ENCODE measurements at regions of chr4 and their contacts with region 1.

Region 1: GRCh38 chr4:74038161-74039064 is at the start of gene CXCL3:
- DNase-seq: peak; percentile 71 to 75
- H3K4me3 ChIP-seq: peak within 1 kb of the TSS; percentile 53
- H3K4me3 Mint-ChIP-seq: peak within 1 kb of the TSS; percentile 78
- H3K27ac Mint-ChIP-seq: peak within 1 kb of the TSS; percentile 14
- H3K4me1 ChIP-seq: no peaks in the 10 kb centered on the region; the same call in 1 of the 2 replicates
- H3K4me1 Mint-ChIP-seq: peaks cover 15% of the 10 kb centered on the region
- H3K27me3 ChIP-seq: no peaks in the 10 kb centered on the region
- H3K27me3 Mint-ChIP-seq: no peaks in the 10 kb centered on the region
- CTCF ChIP-seq: no peak
- total RNA-seq, gene CXCL3: 1.9 and 4.3 TPM in 2 replicates

Region 2: DNA sequence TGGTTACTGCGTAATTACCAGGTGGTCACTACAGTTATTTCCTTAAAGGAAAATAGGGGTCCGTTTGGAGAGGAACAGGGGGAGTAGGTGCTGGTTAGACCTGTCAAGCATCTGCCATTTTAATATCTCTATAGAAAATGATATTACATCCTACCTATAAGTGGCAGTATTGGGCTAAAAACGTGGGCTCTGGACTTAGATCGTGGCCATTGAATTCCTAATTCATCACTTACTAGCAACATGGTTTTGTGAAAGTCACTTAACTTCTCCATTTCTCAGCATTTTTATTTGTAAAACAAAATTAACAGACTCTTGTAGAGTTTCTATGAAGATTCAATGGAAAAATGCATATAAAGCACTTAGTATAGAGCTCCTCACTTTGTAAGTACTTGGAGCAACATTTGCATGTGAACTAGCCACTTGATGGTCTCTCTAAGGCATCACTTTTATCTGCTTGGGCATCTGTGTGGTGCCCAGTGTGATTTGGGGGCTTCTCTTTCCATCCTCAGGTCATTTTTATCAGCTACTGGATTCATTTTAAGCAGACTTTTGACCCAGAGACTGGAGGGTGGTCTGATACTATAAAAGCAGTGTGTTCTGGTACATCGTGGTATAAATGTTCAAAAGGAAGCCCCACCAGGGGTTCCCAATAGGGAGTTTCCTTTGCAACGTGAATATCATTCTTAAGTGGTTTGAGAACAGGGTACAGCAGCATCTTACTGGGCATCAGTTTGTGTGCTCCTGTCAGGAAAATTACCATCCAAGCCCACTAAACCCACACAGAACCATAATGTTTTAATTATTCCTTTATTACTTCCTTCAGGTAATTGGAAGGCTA is 375.5 kb before region 1 on chr4:
- CTCF ChIA-PET with region 1: no interaction called
- POLR2A ChIA-PET with region 1: no interaction called
- intact Hi-C with region 1: loop called (anchors 5 kb)
- DNase-seq: no peak
- H3K4me3 ChIP-seq: no peak overlapping the region
- H3K4me3 Mint-ChIP-seq: no peak overlapping the region
- H3K27ac Mint-ChIP-seq: no peak overlapping the region
- H3K4me1 ChIP-seq: no peaks in the 10 kb centered on the region
- H3K4me1 Mint-ChIP-seq: no peaks in the 10 kb centered on the region
- H3K27me3 ChIP-seq: no peaks in the 10 kb centered on the region
- H3K27me3 Mint-ChIP-seq: no peaks in the 10 kb centered on the region
- CTCF ChIP-seq: peak in 1 of 2 experiments; percentile 19

Region 3: GRCh38 chr4:73729534-73730165 is 308.8 kb before region 1 on chr4:
- CTCF ChIA-PET with region 1: no interaction called
- POLR2A ChIA-PET with region 1: no interaction called
- intact Hi-C with region 1: loop called (anchors 1 kb)
- DNase-seq: peak; percentile 57 to 63
- H3K4me3 ChIP-seq: no peak overlapping the region
- H3K4me3 Mint-ChIP-seq: no peak overlapping the region
- H3K27ac Mint-ChIP-seq: no peak overlapping the region
- H3K4me1 ChIP-seq: no peaks in the 10 kb centered on the region; the same call in 1 of the 2 replicates
- H3K4me1 Mint-ChIP-seq: no peaks in the 10 kb centered on the region
- H3K27me3 ChIP-seq: no peaks in the 10 kb centered on the region
- H3K27me3 Mint-ChIP-seq: no peaks in the 10 kb centered on the region
- CTCF ChIP-seq: peak; percentile 79 to 84

Region 4: DNA sequence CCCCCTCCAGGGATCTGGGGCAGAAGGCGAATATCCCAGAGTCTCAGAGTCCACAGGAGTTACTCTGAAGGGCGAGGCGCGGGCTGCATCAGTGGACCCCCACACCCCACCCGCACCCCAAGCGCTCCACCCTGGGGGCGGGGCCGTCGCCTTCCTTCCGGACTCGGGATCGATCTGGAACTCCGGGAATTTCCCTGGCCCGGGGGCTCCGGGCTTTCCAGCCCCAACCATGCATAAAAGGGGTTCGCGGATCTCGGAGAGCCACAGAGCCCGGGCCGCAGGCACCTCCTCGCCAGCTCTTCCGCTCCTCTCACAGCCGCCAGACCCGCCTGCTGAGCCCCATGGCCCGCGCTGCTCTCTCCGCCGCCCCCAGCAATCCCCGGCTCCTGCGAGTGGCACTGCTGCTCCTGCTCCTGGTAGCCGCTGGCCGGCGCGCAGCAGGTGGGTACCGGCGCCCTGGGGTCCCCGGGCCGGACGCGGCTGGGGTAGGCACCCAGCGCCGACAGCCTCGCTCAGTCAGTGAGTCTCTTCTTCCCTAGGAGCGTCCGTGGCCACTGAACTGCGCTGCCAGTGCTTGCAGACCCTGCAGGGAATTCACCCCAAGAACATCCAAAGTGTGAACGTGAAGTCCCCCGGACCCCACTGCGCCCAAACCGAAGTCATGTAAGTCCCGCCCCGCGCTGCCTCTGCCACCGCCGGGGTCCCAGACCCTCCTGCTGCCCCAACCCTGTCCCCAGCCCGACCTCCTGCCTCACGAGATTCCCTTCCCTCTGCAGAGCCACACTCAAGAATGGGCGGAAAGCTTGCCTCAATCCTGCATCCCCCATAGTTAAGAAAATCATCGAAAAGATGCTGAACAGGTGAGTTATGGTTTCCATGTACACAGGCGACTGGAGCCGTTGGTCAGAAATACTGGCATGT is 169.0 kb before region 1 on chr4 and contains the start of gene CXCL1:
- CTCF ChIA-PET with region 1: interaction called, 8 read pairs
- POLR2A ChIA-PET with region 1: no interaction called
- intact Hi-C with region 1: loop called (anchors 2 kb)
- DNase-seq: peak; percentile 21 to 39
- H3K4me3 ChIP-seq: peak within 1 kb of the TSS; percentile 46
- H3K4me3 Mint-ChIP-seq: peak within 1 kb of the TSS; percentile 91
- H3K27ac Mint-ChIP-seq: peak within 1 kb of the TSS; percentile 61
- H3K4me1 ChIP-seq: no peaks in the 10 kb centered on the region; the same call in 1 of the 2 replicates
- H3K4me1 Mint-ChIP-seq: no peaks in the 10 kb centered on the region
- H3K27me3 ChIP-seq: no peaks in the 10 kb centered on the region
- H3K27me3 Mint-ChIP-seq: peaks cover 7% of the 10 kb centered on the region
- CTCF ChIP-seq: no peak
- total RNA-seq, gene CXCL1: 0.79 TPM in 1 of 2 replicates, not detected in the other

Region 5: DNA sequence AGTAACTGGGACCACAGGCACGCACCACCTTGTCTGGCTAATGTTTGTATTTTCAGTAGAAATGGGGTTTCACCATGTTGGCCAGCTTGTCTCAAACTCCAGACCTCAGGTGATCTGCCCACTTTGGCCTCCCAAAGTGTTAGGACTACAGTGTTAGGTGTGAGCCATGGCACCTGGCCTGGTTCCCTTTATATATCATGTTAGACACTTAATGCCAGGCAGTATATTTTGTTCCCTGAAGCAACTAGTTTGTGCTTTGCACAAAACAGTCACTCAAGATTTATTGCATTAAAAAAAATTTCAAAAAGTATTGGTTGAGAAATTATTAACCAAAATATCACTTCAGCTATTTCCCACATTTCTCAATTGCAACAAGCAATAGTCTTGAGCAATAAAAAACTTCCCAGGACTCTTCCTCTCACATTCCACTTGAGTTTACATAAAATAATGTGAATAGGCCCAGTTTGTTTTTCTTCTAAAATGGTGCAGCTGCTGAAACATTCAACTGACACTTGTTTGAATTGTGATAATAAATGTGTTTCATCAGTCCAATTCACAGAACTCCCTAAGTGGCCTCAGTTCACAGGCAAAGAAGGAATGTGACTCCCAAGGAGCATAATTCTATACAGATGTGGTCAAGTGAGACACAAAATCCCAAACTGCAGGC is 146.5 kb before region 1 on chr4:
- CTCF ChIA-PET with region 1: no interaction called
- POLR2A ChIA-PET with region 1: no interaction called
- intact Hi-C with region 1: no loop called
- DNase-seq: peak in 1 of 2 experiments; percentile 23
- H3K4me3 ChIP-seq: no peak overlapping the region
- H3K4me3 Mint-ChIP-seq: peak overlapping the region; percentile 34
- H3K27ac Mint-ChIP-seq: peak overlapping the region; percentile 56
- H3K4me1 ChIP-seq: peaks cover 30% of the 10 kb centered on the region
- H3K4me1 Mint-ChIP-seq: peaks cover 7% of the 10 kb centered on the region
- H3K27me3 ChIP-seq: no peaks in the 10 kb centered on the region
- H3K27me3 Mint-ChIP-seq: no peaks in the 10 kb centered on the region
- CTCF ChIP-seq: no peak

Region 6: GRCh38 chr4:74228691-74229640 is 190.6 kb after region 1 on chr4:
- CTCF ChIA-PET with region 1: no interaction called
- POLR2A ChIA-PET with region 1: no interaction called
- intact Hi-C with region 1: no loop called
- DNase-seq: peak; percentile 77 to 83
- H3K4me3 ChIP-seq: no peak overlapping the region
- H3K4me3 Mint-ChIP-seq: no peak overlapping the region
- H3K27ac Mint-ChIP-seq: no peak overlapping the region
- H3K4me1 ChIP-seq: no peaks in the 10 kb centered on the region
- H3K4me1 Mint-ChIP-seq: no peaks in the 10 kb centered on the region
- H3K27me3 ChIP-seq: no peaks in the 10 kb centered on the region
- H3K27me3 Mint-ChIP-seq: no peaks in the 10 kb centered on the region
- CTCF ChIP-seq: peak; percentile 61 to 73

Measured in Caco-2 (cell line).